Mucosa of descending colon (tissue), 3 donors: ENCODE measurements at regions of chr10 and their contacts with region 1.

Region 1: GRCh38 chr10:104353325-104354048 is at the start of gene CFAP58:
- DNase-seq: peak; percentile 95 to 97 (median 97)
- ATAC-seq: peak; percentile 99
- H3K4me3 ChIP-seq: no peak within 1 kb of the TSS
- H3K4me1 ChIP-seq: peaks cover 3% of the 10 kb centered on the region
- CTCF ChIP-seq: peak; percentile 62
- total RNA-seq, gene CFAP58: 0.14 to 0.44 (median 0.17) TPM

Region 2: DNA sequence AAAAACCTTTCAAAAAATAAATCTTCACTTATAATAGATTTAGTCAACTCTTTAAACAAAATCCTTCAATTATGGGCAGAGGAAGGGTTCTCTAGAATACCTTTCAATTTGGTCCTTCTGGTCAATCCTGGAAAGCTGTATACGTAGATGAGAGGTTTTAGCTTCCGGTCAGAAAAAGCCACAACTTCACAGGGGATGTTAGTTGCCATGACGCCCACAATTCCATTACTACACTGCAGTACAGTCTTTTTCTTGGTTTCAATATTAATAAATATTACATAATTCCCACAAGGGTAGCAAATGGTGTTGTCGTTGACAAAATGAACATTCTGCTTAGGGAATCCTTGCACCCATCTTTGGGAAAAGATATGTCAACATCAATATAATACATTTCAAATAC is 123.0 kb before region 1 on chr10:
- intact Hi-C with region 1: no loop called
- DNase-seq: no peak
- ATAC-seq: no peak
- H3K4me3 ChIP-seq: no peak overlapping the region
- H3K4me1 ChIP-seq: no peaks in the 10 kb centered on the region
- CTCF ChIP-seq: no peak

Region 3: DNA sequence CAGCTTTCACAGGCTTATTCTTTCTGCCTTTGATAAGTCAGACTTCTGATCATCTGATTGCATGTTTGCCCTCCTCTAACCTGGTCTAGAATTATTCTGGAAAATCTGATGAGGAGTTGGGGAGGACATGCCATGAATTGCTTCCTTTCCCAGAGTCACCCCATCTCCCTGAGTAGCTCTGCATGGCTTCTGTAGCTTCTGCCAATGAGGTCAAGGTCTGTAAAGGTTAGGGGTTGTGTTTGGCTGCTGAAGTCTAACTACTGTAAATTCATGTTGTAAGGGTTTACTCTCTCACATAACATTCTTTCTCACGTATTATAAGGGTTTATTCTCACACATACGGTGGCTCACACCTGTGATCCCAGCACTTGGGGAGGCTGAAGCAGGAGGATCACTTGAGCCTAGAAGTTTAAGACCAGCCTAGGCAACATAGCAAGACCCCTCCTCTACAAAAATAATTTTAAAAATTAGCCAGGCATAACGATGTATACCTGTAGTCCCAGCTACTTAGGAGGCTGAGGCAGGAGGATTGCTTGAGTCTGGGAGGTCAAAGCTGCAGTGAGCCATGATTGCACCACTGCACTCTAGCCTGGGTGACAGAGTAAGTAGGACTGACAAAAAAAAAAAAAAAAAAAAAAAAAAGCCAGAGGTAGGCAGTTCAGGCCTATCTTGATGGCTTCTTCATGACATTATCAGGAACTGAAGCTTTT is 73.8 kb before region 1 on chr10:
- intact Hi-C with region 1: no loop called
- DNase-seq: no peak
- ATAC-seq: no peak
- H3K4me3 ChIP-seq: no peak overlapping the region
- H3K4me1 ChIP-seq: no peaks in the 10 kb centered on the region
- CTCF ChIP-seq: no peak

Region 4: DNA sequence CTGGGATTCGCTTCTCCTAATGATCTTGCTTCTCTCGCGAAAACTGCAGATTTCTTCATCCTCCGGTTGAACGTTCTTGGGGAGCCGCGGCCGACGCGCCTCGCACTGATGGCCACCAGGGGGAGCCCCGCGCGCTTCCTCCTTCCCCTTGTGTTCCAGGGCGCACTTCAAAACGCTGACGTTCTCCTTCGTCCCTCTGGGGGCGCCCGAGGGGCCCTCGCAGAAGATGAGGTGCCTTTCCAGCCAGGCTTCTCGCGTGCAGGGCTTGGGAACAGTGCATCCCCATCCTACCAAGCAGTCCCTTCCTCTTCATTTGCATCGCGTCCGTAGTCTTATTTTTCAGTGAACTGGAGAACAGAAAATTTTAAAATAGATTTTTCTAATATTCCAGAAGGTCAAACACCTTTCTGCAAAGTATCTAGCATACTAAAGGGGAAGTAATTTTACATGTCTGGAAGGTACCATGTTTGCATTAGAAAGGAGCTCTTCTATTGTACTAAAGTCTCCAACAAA is 62.0 kb before region 1 on chr10:
- intact Hi-C with region 1: loop called (anchors 5 kb)
- DNase-seq: peak; percentile 89 to 93 (median 91)
- ATAC-seq: peak; percentile 100
- H3K4me3 ChIP-seq: no peak overlapping the region
- H3K4me1 ChIP-seq: no peaks in the 10 kb centered on the region
- CTCF ChIP-seq: peak; percentile 98

Region 5: DNA sequence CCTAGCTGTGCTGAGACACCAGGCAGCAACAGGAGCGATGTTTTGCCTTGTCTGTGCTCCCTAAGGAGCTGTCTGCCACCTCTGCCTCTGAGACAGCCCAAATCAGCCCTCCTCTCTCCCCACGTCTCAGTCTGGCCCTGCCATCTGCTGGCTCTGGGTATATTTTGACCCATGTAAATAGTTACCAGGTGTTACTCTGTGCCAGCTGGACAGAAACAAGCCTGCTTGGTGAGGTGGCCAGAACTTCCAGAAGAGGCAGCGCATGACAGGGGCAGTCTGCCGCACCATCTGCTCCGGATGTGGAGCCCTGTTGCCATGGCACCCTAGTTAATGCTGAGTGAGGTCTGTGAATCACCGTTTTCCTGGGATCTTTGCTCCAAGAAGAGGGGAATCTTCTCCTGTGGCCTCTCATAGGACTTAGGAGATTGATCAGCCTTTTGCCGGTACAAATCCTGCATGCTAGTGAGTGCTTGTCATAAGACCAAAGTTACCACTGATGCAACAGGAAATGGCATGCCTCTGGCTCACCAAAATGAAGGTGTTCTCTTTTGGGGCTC is 52.7 kb before region 1 on chr10:
- intact Hi-C with region 1: loop called (anchors 5 kb)
- DNase-seq: peak in 2 of 3 donors; percentile 56 to 64
- ATAC-seq: peak; percentile 68
- H3K4me3 ChIP-seq: no peak overlapping the region
- H3K4me1 ChIP-seq: peaks cover 6% of the 10 kb centered on the region
- CTCF ChIP-seq: no peak

Region 6: GRCh38 chr10:104308439-104308903 is 45.0 kb before region 1 on chr10:
- intact Hi-C with region 1: loop called (anchors 5 kb)
- DNase-seq: no peak
- ATAC-seq: no peak
- H3K4me3 ChIP-seq: no peak overlapping the region
- H3K4me1 ChIP-seq: no peaks in the 10 kb centered on the region
- CTCF ChIP-seq: no peak

Region 7: GRCh38 chr10:104424719-104425118 is 71.2 kb after region 1 on chr10:
- intact Hi-C with region 1: no loop called
- DNase-seq: no peak
- ATAC-seq: no peak
- H3K4me3 ChIP-seq: no peak overlapping the region
- H3K4me1 ChIP-seq: no peaks in the 10 kb centered on the region
- CTCF ChIP-seq: no peak